ENCODE measurements at regions of chr14 and their contacts with region 1.

Region 1: DNA sequence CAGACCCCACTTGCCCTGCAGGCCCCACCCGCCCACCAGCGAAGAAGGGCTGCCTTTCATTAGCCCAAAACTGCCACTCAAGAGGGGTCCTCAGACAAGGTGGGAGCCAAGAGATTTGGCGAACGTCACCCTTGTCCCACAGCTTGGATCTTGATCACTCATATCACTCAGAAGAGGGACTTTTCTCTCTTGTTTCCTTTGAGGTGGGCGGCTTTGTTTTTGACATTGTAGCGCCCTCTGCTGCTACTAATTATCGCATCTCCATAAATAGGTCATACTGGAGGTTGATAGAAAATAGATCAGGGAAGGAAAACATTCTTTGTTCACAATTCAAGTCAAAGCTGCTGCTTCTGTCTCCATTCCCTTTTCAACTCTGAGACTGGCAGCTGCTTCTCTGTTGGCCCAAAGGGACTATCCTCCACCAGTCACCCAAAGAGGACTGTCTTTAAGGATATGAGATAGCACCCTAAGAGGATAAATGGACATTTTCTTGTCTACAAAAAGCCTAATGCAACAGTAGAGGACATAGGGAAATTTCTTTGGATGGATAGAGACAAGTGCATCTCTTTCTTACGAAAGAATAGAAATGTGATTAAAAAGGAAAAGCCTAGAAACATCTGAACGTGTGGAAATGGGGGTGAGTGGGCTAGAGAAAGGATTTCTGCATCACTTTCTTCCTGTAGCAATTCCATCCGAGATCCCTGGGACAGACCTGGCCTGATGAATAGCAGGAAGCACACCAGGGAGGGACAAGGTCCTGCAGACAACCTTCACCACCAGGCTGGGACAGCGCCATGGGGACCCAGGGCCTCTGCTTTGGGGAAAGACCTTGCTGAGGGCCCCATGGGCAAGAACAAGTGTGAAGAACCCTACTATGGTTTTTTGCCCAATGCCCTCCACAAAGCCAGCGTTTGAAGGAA is 115.8 kb downstream of the DAD1 start:
- DNase-seq: no peak
- H3K4me3 ChIP-seq: no peak overlapping the region
- H3K27ac ChIP-seq: no peak overlapping the region
- H3K4me1 ChIP-seq: peaks cover 15 to 24% (median 20%) of the 10 kb centered on the region in 4 donors
- H3K27me3 ChIP-seq: peaks cover 0 to 15% (median 0%) of the 10 kb centered on the region in 4 donors
- CTCF ChIP-seq: peak; percentile 58 to 61 (median 58)
- EP300 ChIP-seq: no peak
- POLR2A ChIP-seq: no peak

Region 2: DNA sequence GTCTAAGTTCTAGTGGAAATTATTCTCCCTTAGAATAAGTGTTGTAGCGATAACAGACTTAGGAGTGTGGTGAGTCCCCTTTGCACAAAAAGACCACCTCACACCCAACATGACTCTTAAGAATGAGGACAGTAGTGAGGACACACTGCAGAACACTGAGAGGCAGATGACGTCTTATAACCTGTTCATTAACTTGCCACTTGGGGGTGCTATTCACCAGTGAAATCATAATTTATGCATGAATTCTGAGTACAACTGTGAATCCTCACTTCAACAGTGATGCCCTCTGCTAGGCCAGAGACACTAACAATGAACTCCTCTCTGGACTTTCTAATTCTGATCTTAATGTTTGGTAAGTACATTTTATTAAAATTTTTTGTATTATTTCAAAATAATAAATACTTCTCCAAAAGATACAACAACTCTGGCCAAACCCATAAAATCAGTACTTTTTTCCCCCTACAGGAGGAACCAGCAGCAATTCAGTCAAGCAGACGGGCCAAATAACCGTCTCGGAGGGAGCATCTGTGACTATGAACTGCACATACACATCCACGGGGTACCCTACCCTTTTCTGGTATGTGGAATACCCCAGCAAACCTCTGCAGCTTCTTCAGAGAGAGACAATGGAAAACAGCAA is 158.9 kb before region 1 on chr14:
- intact Hi-C with region 1: loop called (anchors 10 kb)
- DNase-seq: no peak
- H3K4me3 ChIP-seq: no peak overlapping the region
- H3K27ac ChIP-seq: no peak overlapping the region
- H3K4me1 ChIP-seq: no peaks in the 10 kb centered on the region
- H3K27me3 ChIP-seq: no peaks in the 10 kb centered on the region
- CTCF ChIP-seq: peak; percentile 49 to 62 (median 60)
- EP300 ChIP-seq: no peak
- POLR2A ChIP-seq: no peak

Region 3: DNA sequence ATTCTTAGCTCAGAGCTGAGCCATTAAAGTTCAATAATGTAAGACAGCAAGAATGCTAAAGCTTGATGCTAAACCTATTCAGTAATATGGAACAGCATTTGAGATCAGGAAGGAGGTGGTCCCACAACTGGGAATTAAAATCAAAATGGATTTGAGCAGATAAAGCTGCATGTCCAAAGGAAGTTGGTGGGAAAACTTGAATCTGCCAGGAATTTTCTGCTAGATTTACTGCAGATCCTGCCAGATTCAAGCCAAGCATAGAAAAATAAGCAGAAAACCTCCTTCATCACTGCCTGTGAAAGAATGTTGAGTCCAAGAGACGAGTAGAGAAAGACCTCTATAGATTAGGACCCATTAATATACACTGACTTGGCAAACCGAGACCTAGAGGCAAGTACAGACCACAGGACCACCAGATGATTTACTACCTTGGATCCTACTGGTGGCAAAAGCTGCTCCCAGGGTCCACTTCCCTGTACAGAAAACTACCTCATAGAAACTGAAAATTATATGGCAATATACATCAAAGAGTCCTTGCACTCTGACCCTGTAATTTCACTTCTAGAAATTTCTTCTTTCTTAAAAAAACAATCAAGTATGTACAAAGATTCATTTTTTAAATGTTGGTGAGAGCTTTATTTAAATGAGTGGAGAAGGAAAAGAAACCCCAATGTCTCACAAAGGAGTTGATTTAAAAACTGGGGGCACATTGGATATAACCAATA is 147.4 kb before region 1 on chr14:
- intact Hi-C with region 1: no loop called
- DNase-seq: no peak
- H3K4me3 ChIP-seq: no peak overlapping the region
- H3K27ac ChIP-seq: no peak overlapping the region
- H3K4me1 ChIP-seq: no peaks in the 10 kb centered on the region
- H3K27me3 ChIP-seq: no peaks in the 10 kb centered on the region
- CTCF ChIP-seq: no peak
- EP300 ChIP-seq: no peak
- POLR2A ChIP-seq: no peak

Region 4: DNA sequence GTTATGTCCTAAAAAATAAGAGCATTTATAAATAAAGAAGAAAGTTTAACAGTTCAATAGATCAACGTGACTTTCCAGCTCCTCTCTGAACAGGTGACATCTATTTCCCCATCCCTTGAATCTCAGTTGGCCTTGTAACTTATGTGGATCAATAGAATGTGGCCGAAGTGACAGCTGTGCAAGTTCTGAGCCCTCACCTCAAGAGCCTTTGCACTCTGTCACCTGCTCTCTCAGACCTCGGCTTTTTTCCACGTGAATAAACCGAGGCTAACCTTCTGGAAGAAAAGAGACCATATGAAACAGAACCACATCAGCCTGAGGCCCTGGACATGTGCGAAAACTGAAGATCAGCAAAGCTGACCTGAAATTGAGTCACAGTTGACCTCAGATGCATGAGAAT is 137.2 kb before region 1 on chr14:
- intact Hi-C with region 1: no loop called
- DNase-seq: no peak
- H3K4me3 ChIP-seq: no peak overlapping the region
- H3K27ac ChIP-seq: no peak overlapping the region
- H3K4me1 ChIP-seq: peaks cover 14 to 34% (median 17%) of the 10 kb centered on the region in 4 donors
- H3K27me3 ChIP-seq: no peaks in the 10 kb centered on the region
- CTCF ChIP-seq: no peak
- EP300 ChIP-seq: no peak
- POLR2A ChIP-seq: no peak

Region 5: DNA sequence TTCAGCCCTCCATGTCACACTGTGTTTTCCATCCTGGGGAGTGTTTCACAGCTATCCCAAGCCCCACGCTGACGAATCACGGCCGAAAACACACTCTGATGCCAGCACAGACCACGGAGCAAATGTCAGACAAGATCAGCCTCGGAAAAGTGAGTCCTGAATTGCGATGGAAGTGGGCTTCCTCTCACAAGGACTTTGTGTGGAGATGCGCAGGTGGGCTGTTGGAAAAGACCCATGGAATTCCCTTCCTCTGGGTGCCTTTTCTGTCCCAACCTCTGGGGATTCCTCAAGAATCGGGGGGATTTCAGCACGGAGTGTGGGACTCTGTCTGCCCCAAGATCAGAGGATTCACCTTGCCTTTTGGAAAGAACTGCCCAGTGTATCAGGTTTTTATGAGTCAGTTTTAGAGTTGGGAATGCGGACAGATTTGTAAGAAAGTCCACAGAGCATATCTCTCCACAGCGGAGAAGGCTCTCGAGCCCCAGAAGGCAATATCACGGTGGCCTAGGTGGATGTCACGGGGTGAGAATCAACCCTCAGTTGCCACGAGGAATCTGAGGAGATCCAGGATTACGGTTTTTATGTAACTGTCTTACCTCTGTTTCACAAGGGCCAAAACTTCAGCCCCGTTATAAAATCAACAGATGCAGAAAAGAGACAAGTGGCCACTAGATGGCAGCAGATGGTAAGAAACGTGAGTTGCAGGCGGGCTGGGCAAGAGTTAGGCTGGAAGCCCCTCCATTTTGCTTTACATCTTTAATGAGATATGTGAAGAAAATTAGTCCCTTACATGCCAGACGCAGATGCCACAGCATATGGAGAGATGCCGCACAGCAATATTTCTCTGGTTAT is 86.0 kb before region 1 on chr14:
- intact Hi-C with region 1: loop called (anchors 2 kb)
- DNase-seq: no peak
- H3K4me3 ChIP-seq: no peak overlapping the region
- H3K27ac ChIP-seq: no peak overlapping the region
- H3K4me1 ChIP-seq: peaks cover 0 to 6% (median 2%) of the 10 kb centered on the region in 4 donors
- H3K27me3 ChIP-seq: peaks cover 0 to 44% (median 0%) of the 10 kb centered on the region in 4 donors
- CTCF ChIP-seq: peak; percentile 71 to 78 (median 75)
- EP300 ChIP-seq: no peak
- POLR2A ChIP-seq: no peak

Measured in esophagus muscularis mucosa (tissue), 4 donors.